ENCODE measurements at regions of chr13 and their contacts with region 1.

Region 1: GRCh38 chr13:52127783-52128702 is 830 bp downstream of the NEK5 start:
- DNase-seq: peak in 34 of 35 experiments; percentile 3 to 77 (median 40)
- ATAC-seq: peak; percentile 58 to 77 (median 71)
- H3K4me3 ChIP-seq: peak overlapping the region; percentile 70 to 74
- H3K4me3 Mint-ChIP-seq: peak overlapping the region; percentile 80 to 89 (median 86)
- H3K27ac ChIP-seq: no peak overlapping the region
- H3K27ac Mint-ChIP-seq: peak overlapping the region in 1 of 2 donors; percentile 17
- H3K4me1 ChIP-seq: peaks cover 8 to 18% of the 10 kb centered on the region in 2 experiments
- H3K4me1 Mint-ChIP-seq: peaks cover 15 to 22% (median 20%) of the 10 kb centered on the region in 3 donors
- H3K27me3 ChIP-seq: peaks cover 0 to 19% of the 10 kb centered on the region in 2 experiments
- H3K27me3 Mint-ChIP-seq: peaks cover 4% of the 10 kb centered on the region in 2 donors

Region 2: DNA sequence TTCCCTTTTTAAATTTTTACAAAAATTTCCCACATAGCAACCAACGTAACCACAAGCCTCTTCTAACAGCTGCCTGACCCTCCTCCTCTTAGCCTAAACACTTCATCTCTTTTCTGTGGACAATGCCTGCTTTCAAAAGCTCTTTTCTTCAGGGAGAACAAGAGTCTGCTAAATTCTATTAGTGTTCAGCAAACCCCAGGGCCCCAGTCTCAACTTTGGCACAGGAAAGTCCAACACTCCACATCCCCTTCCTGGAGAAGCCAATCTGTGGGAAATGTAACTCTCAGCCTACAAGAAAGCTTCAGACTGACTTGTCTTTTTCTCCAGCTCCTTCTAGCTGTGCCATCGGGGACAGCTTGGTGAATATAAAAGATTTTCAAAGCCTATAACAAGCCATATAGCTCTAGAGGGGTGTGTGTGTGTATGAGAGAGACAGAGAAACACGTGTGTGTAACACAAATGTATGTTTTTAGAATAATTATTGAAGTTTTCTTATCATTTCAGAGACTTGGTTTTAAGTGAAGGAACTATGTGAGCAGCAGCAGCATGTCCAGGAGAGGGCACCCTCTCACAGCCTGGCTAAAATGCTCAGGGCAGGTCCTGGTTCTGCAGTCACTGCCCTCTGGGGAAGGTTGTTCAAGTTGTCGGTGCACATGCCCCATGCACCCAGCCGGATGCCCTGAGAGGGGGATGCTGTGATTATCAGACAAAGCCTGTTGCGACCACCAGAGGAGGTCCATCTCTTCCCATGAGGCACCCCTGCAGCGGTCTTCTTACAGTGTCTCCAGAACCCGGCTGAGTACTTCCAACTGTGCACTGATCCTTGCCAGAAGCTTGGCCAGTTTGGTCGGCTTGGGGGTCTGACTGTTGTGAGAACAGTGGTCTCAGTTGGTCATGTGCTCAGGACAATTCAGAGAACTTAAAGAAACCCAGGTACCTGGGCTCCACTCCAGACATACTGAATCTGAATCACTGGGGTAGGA is 231.8 kb before region 1 on chr13:
- CTCF ChIA-PET with region 1: interaction called, 5 to 11 read pairs
- POLR2A ChIA-PET with region 1: no interaction called
- DNase-seq: peak in 27 of 35 experiments; percentile 4 to 61 (median 26)
- ATAC-seq: peak; percentile 43 to 74 (median 55)
- H3K4me3 ChIP-seq: no peak overlapping the region
- H3K4me3 Mint-ChIP-seq: no peak overlapping the region
- H3K27ac ChIP-seq: no peak overlapping the region
- H3K27ac Mint-ChIP-seq: no peak overlapping the region
- H3K4me1 ChIP-seq: no peaks in the 10 kb centered on the region
- H3K4me1 Mint-ChIP-seq: peaks cover 0 to 4% (median 4%) of the 10 kb centered on the region in 3 donors
- H3K27me3 ChIP-seq: peaks cover 0 to 11% of the 10 kb centered on the region in 2 experiments
- H3K27me3 Mint-ChIP-seq: peaks cover 5 to 13% of the 10 kb centered on the region in 2 donors

Region 3: DNA sequence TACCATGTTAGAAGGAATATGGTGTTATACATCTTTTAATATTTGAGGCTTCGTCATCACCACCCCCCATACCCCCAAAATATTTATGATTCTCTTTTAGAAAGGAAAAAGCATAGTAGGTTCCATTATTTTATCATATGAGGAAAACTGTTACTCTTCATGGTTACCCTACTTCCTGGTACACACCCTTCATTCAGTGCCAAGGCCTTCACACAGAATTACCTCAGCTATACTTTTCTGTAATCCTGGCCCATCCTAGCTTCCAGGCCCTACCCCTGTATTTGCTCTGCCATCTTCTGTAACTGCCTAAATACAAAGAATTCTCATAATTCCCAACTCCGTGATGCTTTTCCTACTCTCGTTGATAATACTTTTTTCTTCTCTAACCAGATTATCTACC is 107.9 kb before region 1 on chr13:
- CTCF ChIA-PET with region 1: no interaction called
- POLR2A ChIA-PET with region 1: no interaction called
- DNase-seq: no peak
- ATAC-seq: no peak
- H3K4me3 ChIP-seq: no peak overlapping the region
- H3K4me3 Mint-ChIP-seq: no peak overlapping the region
- H3K27ac ChIP-seq: no peak overlapping the region
- H3K27ac Mint-ChIP-seq: no peak overlapping the region
- H3K4me1 ChIP-seq: no peaks in the 10 kb centered on the region
- H3K4me1 Mint-ChIP-seq: peaks cover 34 to 43% (median 41%) of the 10 kb centered on the region in 3 donors
- H3K27me3 ChIP-seq: no peaks in the 10 kb centered on the region
- H3K27me3 Mint-ChIP-seq: no peaks in the 10 kb centered on the region

Region 4: DNA sequence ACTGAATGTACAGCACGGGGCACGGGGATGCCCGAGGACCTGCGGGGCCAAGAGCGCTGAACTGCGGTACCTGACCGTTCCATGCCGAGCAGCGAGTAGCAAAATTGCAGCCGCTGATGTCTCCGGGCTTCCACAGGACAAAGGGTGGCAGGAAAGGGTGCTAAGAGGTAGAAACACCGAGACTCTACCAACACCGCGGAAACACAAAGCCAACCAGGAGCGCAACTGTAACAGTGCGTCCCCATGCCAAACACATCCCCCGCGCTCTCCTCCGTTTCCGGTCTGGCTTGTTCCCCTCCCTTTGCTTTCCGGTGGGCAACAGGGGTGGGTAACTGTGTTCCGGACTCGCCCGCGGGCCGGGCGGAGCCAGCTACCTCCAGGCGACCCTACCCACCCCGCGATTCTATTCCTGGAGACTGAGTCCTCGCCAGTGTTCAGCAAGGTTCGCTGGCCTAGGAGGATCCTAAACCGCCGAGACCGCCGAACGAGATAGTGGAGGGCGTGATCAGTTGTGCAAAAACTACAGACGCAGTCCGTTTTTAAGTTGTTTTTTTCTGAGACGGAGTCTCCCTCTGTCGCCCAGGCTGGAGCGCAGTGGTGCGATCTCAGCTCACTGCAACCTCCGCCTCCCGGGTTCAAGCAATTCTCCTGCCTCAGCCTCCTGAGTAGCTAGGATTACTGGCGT is 66.3 kb after region 1 on chr13:
- CTCF ChIA-PET with region 1: no interaction called
- POLR2A ChIA-PET with region 1: no interaction called
- DNase-seq: peak; percentile 69 to 93 (median 81)
- ATAC-seq: peak; percentile 79 to 89 (median 84)
- H3K4me3 ChIP-seq: peak overlapping the region; percentile 87 to 94
- H3K4me3 Mint-ChIP-seq: peak overlapping the region; percentile 97 to 99 (median 98)
- H3K27ac ChIP-seq: peak overlapping the region; percentile 74
- H3K27ac Mint-ChIP-seq: peak overlapping the region; percentile 96 to 100
- H3K4me1 ChIP-seq: peaks cover 0 to 19% of the 10 kb centered on the region in 2 experiments
- H3K4me1 Mint-ChIP-seq: peaks cover 30 to 41% (median 39%) of the 10 kb centered on the region in 3 donors
- H3K27me3 ChIP-seq: no peaks in the 10 kb centered on the region
- H3K27me3 Mint-ChIP-seq: no peaks in the 10 kb centered on the region

Measured in T-cell (primary cell).